ENCODE measurements at regions of chr3 and their contacts with region 1.

Region 1: DNA sequence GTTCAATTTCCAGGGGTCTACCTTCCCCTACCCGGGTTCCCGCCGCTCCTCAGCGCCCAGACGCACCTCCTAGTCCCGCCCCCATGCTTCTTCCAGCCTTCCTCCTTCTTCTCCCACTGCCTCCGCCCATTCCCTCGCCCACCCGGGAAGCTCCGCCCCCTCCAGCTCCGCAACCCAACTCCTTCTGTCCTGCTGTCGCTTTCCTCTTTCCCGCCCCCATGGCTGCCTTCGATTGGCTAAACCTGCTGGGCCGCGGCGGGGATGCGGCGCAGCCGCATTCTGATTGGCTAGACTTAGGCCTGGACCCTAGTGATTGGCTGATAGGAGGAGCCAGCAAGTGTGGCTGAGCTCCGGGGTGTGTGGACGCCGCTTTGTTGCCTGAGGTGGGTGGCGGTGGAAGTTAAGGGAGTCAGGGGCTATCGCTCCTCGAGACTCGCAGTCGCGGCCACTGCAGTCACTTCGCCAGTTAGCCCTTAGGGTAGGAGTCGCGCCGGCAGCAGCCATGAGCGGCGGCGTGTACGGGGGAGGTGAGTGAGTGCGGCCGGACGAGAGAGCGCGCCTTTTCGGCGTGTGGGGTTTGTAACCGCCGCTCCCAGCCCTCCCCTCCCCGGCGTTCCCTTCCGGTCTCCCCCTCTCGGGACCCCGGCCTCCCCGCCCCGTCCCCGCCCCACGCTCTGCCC is at the start of gene ACTL6A:
- DNase-seq: peak; percentile 98
- CTCF ChIP-seq: no peak

Region 2: DNA sequence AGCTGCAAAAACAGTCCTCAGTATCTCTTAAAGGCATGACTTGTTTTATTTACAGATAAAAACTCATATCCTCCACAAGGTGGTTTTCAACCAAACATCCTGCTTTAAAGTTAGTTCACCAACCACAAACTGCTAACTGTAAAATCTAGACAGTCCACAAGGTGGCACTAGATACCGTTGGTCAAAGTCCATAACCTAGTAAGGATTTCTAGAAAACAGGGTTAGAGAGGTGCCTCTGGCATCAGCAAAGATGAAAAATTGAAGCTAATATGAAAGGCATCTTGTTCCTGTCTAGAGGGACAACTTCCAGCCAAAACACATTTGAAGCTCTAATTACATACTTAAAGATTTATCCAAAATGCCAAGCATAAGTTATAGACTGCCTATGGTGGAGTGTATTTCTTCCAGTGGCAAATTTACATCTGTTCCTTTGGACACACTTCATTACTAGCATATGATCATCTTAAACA is 547.1 kb before region 1 on chr3:
- in situ Hi-C with region 1: loop called (anchors 25 kb)
- DNase-seq: peak; percentile 54
- CTCF ChIP-seq: peak; percentile 62

Region 3: GRCh38 chr3:179322286-179323196 is 240.2 kb before region 1 on chr3 and contains the start of gene ZNF639:
- in situ Hi-C with region 1: loop called (anchors 10 kb)
- DNase-seq: peak; percentile 95
- CTCF ChIP-seq: peak; percentile 91

Region 4: GRCh38 chr3:179446501-179446900 is 116.2 kb before region 1 on chr3:
- in situ Hi-C with region 1: loop called (anchors 10 kb)
- DNase-seq: no peak
- CTCF ChIP-seq: peak; percentile 25

Region 5: GRCh38 chr3:179750720-179751328 is 188.1 kb after region 1 on chr3:
- in situ Hi-C with region 1: no loop called
- DNase-seq: no peak
- CTCF ChIP-seq: peak; percentile 64

Measured in GM13977 (cell line).